Stomach (tissue), 19 donors: ENCODE measurements at regions of chr9 and their contacts with region 1.

Region 1: DNA sequence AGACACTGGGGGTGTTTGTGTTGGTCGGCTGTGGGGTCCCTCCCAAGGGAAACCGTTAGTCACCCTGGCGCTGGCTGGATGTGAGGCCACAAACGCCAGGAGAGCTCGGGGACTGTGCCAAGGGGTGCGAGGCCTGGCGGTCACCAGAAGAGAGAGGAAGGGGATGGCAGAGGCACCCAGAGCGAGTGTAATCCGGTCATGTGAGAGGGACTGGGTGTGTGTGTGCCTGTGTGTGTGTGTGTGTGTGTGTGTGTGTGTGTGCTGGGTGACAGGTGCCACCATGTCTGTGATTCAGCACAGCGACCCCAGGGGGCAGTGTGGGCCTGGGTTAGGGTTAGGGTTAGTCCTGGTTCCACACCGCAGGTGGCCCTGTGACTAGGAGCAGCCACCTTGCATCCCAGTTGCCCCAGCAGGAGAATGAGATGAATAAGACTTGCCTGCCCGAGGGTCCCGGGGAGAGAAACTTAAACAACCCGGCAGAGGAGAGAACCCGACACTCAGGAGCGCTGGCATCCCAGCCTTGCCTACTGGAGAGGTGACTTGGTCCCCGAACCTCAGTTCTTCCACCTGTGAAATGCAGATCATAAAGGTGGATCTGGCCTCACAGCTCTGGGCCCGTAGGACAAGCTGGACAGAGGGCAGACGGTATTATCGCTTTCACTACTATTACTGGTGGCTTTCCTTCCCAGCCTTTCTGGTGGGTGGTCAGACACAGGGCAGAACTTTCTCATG is 1.4 kb upstream of the ADAMTSL2 start:
- DNase-seq: peak; percentile 79 to 81
- H3K4me3 ChIP-seq: no peak overlapping the region
- H3K27ac ChIP-seq: no peak overlapping the region
- H3K4me1 ChIP-seq: peaks cover 12 to 39% (median 32%) of the 10 kb centered on the region in 4 donors
- H3K27me3 ChIP-seq: peaks cover 0 to 61% (median 34%) of the 10 kb centered on the region in 3 donors
- CTCF ChIP-seq: peak in 5 of 7 experiments; percentile 29 to 79 (median 50)
- EP300 ChIP-seq: no peak
- POLR2A ChIP-seq: no peak

Region 2: GRCh38 chr9:133184962-133185361 is 348.1 kb before region 1 on chr9:
- intact Hi-C with region 1: no loop called
- DNase-seq: peak; percentile 46 to 88
- H3K4me3 ChIP-seq: no peak overlapping the region
- H3K27ac ChIP-seq: no peak overlapping the region
- H3K4me1 ChIP-seq: peaks cover 0 to 11% (median 6%) of the 10 kb centered on the region in 4 donors
- H3K27me3 ChIP-seq: peaks cover 0 to 62% (median 22%) of the 10 kb centered on the region in 3 donors
- CTCF ChIP-seq: peak in 5 of 7 experiments; percentile 30 to 49 (median 47)
- EP300 ChIP-seq: no peak
- POLR2A ChIP-seq: no peak

Region 3: DNA sequence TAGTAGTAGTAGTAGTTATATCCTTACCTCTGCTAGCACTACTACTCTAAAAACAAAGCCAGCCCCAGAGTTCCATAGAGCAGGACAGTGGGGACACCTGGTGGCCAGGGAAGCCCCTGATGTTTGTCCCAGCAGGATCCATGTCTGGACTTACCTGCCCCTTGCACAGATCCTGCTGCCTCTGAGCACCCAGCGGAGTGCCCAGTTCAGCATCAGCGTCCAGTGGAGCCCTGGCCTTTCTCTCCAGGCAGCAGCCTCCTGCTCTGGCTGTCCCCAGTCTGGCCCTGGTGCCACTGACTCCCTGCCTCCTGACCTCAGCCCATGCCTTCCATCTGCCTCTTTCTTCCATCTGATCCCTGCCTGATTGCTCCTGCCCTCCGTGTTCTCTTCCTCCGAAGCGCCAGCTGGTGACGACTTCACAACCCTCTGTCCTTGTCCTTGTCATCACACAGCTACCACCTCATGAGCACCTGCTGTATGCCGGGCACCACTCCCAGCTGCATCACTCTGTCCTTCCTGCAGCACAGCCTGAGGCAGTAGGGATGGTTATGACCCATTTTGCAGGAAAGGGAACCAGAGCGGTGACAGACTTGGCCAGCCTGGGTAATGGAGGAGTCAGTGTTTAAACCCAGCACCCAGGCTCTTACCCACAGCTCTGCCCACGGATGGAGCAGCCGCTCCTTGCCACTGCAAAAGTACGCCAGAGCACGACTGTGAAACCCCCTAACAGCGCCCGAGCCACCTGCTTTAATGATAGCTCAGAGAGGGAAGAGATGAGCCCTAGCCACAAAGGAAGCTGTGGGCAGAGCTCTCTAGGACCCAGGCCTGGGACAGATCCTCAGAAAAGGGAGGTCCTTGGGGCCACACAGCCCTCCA is 193.5 kb after region 1 on chr9:
- intact Hi-C with region 1: loop called (anchors 10 kb)
- DNase-seq: peak; percentile 52 to 81
- H3K4me3 ChIP-seq: no peak overlapping the region
- H3K27ac ChIP-seq: no peak overlapping the region
- H3K4me1 ChIP-seq: no peaks in the 10 kb centered on the region
- H3K27me3 ChIP-seq: peaks cover 0 to 6% (median 0%) of the 10 kb centered on the region in 3 donors
- CTCF ChIP-seq: peak in 4 of 7 experiments; percentile 16 to 52 (median 28)
- EP300 ChIP-seq: no peak
- POLR2A ChIP-seq: no peak